Sciatic nerve (tissue), 2 donors: ENCODE measurements at regions of chrX and their contacts with region 1.

Region 1: DNA sequence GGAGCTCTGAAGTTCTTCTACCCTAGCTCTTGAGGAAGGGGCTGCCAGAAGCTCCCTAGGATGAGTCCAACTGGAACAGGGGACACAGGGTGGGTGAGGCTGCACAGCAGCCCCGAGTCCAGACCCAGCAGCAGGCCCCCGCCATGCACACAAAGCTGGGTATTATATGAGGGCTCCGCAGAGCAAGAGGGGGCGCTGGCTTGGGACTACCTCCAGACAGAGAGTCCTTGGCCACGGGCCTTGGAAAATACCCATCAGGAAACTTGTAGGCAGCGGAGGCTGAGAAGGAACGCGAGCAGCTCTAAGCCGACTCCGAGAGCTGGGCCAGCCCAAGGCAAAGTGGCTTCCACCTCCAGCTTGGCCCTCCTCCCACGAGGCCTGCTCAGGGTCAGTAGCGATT is 8.1 kb downstream of the HCFC1 start:
- DNase-seq: no peak
- ATAC-seq: no peak

Region 2: DNA sequence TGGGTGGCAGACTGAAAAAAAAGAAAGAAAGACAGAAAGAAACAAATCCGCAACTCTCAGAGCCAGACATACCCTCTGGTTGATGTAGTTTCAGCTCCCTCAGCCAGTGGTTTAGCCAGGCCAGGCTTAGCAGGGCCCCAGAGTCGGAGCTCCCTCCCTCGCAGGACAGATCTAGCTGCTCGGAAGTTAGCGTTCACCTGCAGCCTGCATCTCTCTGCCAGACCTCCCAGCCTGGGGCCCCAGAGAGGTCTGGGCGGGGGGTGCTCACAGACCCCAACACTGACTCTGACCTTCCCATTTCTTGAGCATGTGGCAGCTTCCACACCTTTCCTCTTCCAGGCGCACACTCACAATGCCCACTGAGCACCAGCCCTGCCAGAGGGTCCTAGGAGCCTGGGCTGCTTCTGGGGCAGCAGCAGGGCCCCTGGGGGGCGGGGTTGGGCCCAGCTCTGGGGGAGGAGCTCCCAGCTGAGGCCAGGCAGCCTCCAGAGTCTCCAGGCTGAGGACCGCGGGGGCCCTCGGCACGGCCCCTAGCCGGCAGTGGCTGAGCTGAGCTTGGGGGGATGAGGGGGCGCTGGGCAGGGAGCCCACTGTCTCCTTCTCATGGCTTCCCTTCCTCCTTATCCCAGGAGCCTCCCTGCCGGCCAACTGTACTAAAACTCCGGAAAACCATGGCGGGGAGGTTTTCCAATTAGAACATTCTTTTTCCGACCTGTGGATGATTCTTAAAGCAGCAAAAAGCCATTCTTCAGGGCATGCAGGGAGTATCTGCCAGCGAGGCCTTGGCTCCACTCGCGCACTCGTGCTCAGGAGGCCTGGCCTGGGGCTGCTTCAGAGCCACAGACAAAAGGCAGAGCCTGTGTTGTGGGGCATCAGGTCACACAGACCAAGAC is 1070.3 kb before region 1 on chrX:
- intact Hi-C with region 1: no loop called
- DNase-seq: no peak
- ATAC-seq: no peak

Region 3: GRCh38 chrX:153782313-153782712 is 181.2 kb before region 1 on chrX:
- intact Hi-C with region 1: loop called (anchors 5 kb)
- DNase-seq: no peak
- ATAC-seq: no peak

Region 4: GRCh38 chrX:154333837-154334271 is 370.3 kb after region 1 on chrX:
- intact Hi-C with region 1: no loop called
- DNase-seq: no peak
- ATAC-seq: no peak